ENCODE measurements at regions of chr14 and their contacts with region 1.

Region 1: DNA sequence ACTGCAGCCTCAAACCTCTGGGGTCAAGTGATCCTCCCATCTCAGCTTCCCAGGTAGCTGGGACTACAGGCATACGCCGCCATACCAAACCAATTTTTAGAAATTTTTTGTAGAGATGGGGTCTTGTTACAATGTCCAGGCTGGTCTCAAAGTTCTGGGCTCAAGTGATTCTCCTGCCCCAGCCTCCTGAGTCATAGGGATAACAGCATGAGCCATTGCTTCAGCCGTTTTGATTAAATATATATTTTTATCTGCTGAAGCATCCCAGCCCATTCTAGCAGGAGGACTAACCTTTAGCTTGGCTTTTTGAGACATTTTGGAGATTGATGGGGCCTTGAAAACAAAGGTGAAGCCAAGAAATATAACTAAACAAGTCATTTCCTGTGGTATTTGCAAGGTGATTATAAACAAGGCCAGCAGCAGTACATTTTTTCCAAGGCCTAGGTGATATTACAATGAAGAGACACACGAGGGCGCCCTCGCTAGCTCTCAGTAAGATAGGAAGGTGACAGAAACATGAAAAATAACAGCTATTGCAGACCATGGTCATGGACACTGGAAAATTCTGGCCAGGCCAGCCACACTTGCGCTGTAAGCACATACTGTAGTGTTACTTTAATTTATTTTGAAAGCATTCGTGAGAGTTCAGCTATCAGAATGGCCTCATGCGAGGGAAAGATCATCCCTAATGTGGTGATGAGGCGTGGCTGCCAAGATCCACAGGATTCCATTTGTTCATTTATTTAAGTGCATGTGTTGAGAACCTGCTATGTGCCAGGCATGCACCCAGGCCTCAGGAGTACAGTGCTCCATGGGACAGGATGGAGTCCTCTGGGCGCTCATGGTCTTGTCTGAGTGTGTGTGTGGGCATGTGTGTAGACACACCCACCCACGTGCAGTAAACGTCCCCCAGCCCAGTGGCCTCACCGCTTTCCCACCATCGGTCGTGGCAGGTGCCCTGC is 63.5 kb downstream of the DGLUCY start:
- DNase-seq: peak; percentile 80
- H3K4me3 Mint-ChIP-seq: no peak overlapping the region
- H3K27ac Mint-ChIP-seq: peak overlapping the region; percentile 84
- H3K4me1 Mint-ChIP-seq: peaks cover 14% of the 10 kb centered on the region
- H3K27me3 Mint-ChIP-seq: no peaks in the 10 kb centered on the region

Region 2: DNA sequence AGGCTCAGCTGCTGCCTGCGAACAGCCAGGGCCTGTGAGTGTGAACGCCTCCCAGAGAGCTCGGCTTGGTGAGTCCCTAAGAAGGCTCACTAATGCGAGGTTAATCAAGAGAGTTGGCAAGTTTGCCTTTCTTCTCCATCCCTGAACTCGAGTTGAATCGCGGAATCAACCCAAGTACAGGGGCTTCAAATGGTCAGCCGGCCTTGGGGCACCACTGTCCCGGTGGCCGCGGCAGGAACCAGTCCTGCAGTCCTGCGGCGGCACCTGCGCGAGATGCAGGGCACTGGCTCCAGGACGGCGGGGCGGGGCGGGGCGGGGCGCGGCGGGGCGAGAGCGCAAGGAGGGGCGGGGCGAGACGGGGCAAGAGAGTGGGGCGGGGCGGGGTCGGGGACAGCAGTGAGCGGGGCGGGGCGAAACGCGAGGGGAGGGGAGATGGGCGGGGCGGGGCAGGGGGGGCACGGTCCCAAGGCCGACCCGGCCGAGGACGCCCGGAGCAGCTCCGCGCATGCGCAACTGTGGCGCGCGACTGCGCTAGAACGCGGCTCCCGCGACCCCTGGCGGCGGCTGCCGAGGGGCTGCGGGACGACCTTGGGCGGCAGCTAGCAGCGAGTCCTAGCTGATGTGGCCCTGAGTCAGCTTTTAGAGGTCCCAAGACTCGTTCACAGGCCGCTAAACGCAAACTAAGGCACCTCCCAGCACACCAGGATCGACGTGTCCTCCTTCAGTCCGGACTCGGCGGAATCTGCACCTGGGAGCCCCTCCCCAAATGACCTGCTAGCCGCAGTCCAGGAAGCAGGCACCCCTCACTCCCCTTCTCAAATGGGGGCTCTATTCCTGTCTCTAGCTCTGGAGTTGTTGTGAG is 419.1 kb before region 1 on chr14:
- CTCF ChIA-PET with region 1: interaction called, 10 read pairs
- POLR2A ChIA-PET with region 1: no interaction called
- intact Hi-C with region 1: no loop called
- DNase-seq: peak; percentile 97
- H3K4me3 Mint-ChIP-seq: peak overlapping the region; percentile 73
- H3K27ac Mint-ChIP-seq: peak overlapping the region; percentile 75
- H3K4me1 Mint-ChIP-seq: peaks cover 22% of the 10 kb centered on the region
- H3K27me3 Mint-ChIP-seq: no peaks in the 10 kb centered on the region

Region 3: GRCh38 chr14:91038438-91038837 is 138.9 kb before region 1 on chr14:
- CTCF ChIA-PET with region 1: interaction called, 13 read pairs
- POLR2A ChIA-PET with region 1: no interaction called
- intact Hi-C with region 1: no loop called
- DNase-seq: peak; percentile 45
- H3K4me3 Mint-ChIP-seq: no peak overlapping the region
- H3K27ac Mint-ChIP-seq: peak overlapping the region; percentile 42
- H3K4me1 Mint-ChIP-seq: peaks cover 75% of the 10 kb centered on the region
- H3K27me3 Mint-ChIP-seq: no peaks in the 10 kb centered on the region

Region 4: DNA sequence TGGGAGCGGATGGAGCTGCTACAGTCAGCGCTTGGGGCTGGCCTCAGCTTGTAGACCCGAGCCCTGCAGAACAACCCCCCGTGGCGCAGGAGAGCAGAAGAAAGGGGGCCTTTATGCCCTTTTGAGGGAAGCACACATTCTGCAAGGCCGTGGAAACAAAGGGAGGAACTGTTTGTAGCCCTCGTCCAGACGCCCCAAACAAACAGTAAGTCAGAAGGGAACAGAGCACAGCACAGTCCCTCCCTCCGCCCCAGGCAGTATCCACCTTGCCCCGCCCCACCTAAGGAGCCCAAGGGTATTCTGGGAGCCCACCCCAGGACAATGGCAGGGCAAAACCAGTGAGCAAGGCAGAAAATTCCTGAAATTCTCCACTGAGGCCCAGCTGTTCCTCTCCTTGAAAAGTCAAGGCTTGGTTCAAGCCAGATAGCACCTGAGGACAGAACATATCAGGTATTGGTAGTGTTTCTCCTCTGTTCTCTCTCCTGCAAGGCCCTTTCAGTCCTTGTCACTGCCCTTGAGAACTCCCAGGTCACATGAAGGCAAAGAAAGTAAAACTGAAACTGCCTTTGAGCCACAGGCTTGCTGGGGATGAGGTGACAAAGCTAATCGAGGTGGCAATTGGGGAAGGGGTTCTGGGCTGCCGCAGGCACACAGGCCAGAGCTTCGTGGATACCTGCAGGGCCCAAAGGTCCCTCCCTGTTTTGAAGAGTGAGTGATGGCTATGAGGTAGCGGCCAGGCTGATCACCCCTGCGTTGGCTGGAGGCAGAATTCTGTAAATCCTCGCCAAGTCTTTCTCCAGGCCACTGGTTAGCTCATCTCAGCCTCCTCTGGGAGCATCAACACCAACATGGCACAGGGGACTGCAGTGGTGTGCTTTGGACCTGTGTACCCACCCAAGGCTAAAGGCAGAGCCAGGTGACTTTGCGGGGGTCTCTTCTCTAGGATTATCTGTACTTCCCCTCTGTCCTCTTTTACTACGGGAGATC is 63.0 kb before region 1 on chr14:
- CTCF ChIA-PET with region 1: interaction called, 14 read pairs
- POLR2A ChIA-PET with region 1: no interaction called
- intact Hi-C with region 1: no loop called
- DNase-seq: peak; percentile 81
- H3K4me3 Mint-ChIP-seq: peak overlapping the region; percentile 83
- H3K27ac Mint-ChIP-seq: peak overlapping the region; percentile 94
- H3K4me1 Mint-ChIP-seq: peaks cover 66% of the 10 kb centered on the region
- H3K27me3 Mint-ChIP-seq: no peaks in the 10 kb centered on the region

Region 5: DNA sequence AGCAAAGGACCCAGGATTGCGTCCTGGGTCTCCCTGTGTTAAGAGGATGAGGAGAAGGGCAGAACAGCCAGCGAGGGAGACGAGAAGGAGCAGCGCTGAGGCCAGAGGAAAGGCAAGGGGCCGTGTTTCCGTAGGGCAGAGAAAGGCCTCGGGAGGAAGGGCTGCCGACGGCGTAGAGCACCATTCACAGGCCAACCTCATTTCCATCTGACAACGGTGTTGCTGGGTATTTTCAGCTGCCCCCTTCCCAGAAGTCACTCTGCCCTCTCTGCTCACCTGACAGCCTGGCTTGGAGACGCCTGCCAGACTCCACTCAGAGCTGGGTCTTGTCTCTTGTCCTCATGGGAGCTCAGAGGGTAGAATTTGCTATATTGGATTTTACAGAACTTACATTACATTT is 15.7 kb after region 1 on chr14:
- CTCF ChIA-PET with region 1: interaction called, 20 read pairs
- POLR2A ChIA-PET with region 1: interaction called, 3 read pairs
- intact Hi-C with region 1: no loop called
- DNase-seq: no peak
- H3K4me3 Mint-ChIP-seq: no peak overlapping the region
- H3K27ac Mint-ChIP-seq: no peak overlapping the region
- H3K4me1 Mint-ChIP-seq: peaks cover 15% of the 10 kb centered on the region
- H3K27me3 Mint-ChIP-seq: no peaks in the 10 kb centered on the region

Region 6: GRCh38 chr14:91244501-91244901 is 67.1 kb after region 1 on chr14 and contains the start of gene GPR68:
- CTCF ChIA-PET with region 1: interaction called, 39 read pairs
- POLR2A ChIA-PET with region 1: interaction called, 4 read pairs
- intact Hi-C with region 1: loop called (anchors 1 kb)
- DNase-seq: peak; percentile 51
- H3K4me3 Mint-ChIP-seq: peak within 1 kb of the TSS; percentile 73
- H3K27ac Mint-ChIP-seq: peak within 1 kb of the TSS; percentile 84
- H3K4me1 Mint-ChIP-seq: peaks cover 93% of the 10 kb centered on the region
- H3K27me3 Mint-ChIP-seq: no peaks in the 10 kb centered on the region
- total RNA-seq, gene GPR68: 6.5 to 6.9 TPM

Region 7: DNA sequence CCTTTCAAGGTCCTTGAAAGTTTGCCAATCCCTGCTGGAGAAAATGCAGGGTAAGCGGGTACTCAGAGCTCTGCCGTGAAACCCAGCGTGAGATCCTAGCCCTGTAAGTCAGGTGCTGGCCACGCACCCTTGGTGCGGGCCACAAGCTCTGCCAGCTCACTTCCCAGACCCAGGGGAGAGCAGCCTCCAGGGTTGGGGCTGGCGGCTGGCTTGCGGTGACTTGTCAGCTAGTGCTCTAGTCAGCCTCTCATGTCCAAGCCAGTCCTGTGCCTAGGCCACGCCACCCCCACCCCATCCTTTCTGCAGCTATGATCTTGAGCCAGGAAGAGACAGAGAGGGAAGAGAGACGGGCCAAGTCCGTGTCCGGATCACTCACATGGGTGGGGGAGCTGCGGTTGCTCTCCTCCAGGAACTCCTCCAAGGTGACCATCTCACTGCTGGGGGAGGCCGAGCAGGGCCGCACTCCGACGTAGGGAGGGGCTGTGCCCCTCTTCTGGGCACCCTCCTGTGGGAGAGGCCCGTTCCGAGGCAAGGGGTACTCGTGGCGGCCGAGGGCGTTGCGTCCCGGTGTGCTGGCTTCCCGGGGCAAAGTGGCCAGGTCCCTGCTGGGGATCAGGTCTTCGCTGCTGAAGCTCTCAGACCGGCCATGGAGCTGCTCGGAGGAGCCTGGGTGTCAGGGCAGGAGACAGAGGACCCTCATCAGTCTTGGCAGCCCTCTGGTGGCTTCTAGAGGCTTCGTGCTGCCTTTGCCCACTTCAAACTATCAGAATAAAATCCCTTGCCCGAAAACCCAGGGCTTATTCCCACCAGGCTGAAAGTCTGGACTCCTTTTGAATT is 100.4 kb after region 1 on chr14:
- CTCF ChIA-PET with region 1: interaction called, 354 read pairs
- POLR2A ChIA-PET with region 1: interaction called, 3 read pairs
- intact Hi-C with region 1: no loop called
- DNase-seq: no peak
- H3K4me3 Mint-ChIP-seq: no peak overlapping the region
- H3K27ac Mint-ChIP-seq: no peak overlapping the region
- H3K4me1 Mint-ChIP-seq: peaks cover 2% of the 10 kb centered on the region
- H3K27me3 Mint-ChIP-seq: no peaks in the 10 kb centered on the region

Measured in activated CD4-positive, alpha-beta memory T cell treated with anti-CD3 and anti-CD28 coated beads for 36 hours (primary cell).